Caco-2 (cell line): ENCODE measurements at regions of chr11 and their contacts with region 1.

Region 1: GRCh38 chr11:57761301-57762234 is at the start of gene CTNND1:
- DNase-seq: peak; percentile 94 to 96
- H3K4me3 ChIP-seq: peak within 1 kb of the TSS; percentile 84
- H3K4me3 Mint-ChIP-seq: peak within 1 kb of the TSS; percentile 96
- H3K27ac Mint-ChIP-seq: peak within 1 kb of the TSS; percentile 98
- H3K4me1 ChIP-seq: peaks cover 27% of the 10 kb centered on the region
- H3K4me1 Mint-ChIP-seq: peaks cover 27% of the 10 kb centered on the region
- H3K27me3 ChIP-seq: no peaks in the 10 kb centered on the region
- H3K27me3 Mint-ChIP-seq: no peaks in the 10 kb centered on the region
- CTCF ChIP-seq: peak in 1 of 2 experiments; percentile 23
- total RNA-seq, gene CTNND1: 223 and 225 TPM in 2 replicates

Region 2: GRCh38 chr11:57515332-57516060 is 246.1 kb before region 1 on chr11 and contains the start of gene SLC43A1:
- CTCF ChIA-PET with region 1: no interaction called
- POLR2A ChIA-PET with region 1: no interaction called
- intact Hi-C with region 1: no loop called
- DNase-seq: peak; percentile 66 to 75
- H3K4me3 ChIP-seq: peak within 1 kb of the TSS; percentile 79
- H3K4me3 Mint-ChIP-seq: peak within 1 kb of the TSS; percentile 91
- H3K27ac Mint-ChIP-seq: peak within 1 kb of the TSS; percentile 82
- H3K4me1 ChIP-seq: peaks cover 8% of the 10 kb centered on the region
- H3K4me1 Mint-ChIP-seq: no peaks in the 10 kb centered on the region
- H3K27me3 ChIP-seq: no peaks in the 10 kb centered on the region
- H3K27me3 Mint-ChIP-seq: no peaks in the 10 kb centered on the region
- CTCF ChIP-seq: no peak
- total RNA-seq, gene SLC43A1: 71.7 and 80.5 TPM in 2 replicates

Region 3: DNA sequence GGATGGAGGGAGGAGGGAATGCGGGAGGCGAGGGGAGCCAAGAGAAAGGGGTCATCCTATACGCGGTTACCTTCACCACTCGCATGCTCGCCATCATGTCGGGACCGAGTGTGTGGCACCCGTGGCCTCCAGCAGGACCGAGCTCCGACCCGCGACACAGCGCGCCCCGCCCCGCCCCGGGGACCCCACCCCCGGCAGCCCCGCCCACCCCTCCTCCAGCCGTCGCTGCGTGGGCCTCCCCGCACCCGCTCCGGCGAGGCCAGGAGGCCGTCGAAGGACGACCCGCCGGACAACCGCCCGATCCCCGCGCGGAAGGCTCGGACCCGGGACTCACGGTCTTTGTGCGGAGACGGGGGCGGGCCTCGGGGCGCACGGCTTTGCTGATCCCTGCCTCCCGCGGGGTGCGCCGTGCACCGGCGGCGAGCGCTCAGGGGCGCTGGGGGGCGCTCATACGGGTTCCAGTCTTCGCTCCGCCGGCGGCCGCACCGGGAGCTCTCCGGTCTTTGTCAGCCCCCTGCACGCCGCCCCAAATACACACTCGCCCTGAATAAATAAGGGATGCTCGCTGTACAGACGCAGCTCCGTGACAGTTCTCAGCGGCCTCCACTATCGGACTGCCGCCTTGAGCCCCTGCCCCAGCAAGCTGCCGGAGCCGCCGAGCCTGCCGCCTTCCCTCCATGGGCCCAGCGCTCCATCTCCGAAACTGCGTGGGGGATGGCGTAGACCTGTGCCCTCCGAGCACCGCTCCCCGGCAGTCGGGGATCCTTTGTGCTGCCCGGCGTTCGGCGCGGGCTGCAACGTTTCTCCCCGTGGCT is 193.8 kb before region 1 on chr11 and contains the start of gene UBE2L6:
- CTCF ChIA-PET with region 1: no interaction called
- POLR2A ChIA-PET with region 1: no interaction called
- intact Hi-C with region 1: no loop called
- DNase-seq: peak; percentile 55 to 67
- H3K4me3 ChIP-seq: peak within 1 kb of the TSS; percentile 54
- H3K4me3 Mint-ChIP-seq: peak within 1 kb of the TSS; percentile 96
- H3K27ac Mint-ChIP-seq: peak within 1 kb of the TSS; percentile 40
- H3K4me1 ChIP-seq: peaks cover 10% of the 10 kb centered on the region; the same call in 1 of the 2 replicates
- H3K4me1 Mint-ChIP-seq: peaks cover 14% of the 10 kb centered on the region
- H3K27me3 ChIP-seq: no peaks in the 10 kb centered on the region
- H3K27me3 Mint-ChIP-seq: no peaks in the 10 kb centered on the region
- CTCF ChIP-seq: peak in 1 of 2 experiments; percentile 49
- total RNA-seq, gene UBE2L6: 16.7 and 20.2 TPM in 2 replicates

Region 4: DNA sequence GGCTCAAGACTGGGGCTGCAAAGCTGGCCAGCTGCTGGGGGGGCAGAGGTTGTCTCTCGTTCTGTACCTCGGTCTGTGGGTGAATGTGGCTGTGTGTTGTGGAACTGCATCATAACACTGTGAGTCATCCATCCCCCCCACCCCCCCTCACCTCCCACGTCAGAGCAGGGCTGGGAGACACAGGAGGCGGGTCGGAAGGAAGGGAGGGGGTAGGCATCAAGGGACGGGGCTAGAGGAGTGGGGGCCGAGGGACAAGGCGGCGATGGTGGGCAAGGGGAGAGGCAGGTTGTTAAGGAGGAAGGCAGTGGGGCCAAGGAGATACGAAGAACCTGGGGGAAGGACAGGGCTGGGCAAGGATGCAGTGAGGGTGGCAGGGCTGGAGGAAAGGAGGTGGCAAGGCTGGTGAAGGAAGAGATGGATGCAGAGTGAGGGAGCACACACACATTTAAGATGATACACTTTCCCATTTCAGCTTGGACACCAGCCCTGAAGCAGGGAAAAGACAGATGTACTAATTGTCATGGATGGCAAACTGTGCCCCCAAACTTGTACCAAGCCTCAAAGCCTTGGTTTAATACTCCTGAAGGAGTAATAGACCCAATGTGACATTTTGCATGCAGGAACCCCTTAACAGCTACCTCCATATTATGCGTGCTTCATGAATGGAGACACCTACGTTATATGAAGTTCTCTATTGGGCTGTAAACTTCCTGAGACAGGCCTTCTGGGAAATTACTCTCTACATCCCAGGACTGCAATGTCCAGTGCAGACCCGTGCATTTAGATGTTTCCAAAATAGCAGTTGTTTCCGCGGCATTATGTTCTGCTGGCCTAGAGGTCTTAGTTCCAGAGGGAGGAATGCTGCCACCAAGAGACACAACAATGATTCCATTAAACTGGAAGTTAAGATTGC is 111.5 kb before region 1 on chr11 and contains the start of gene YPEL4:
- CTCF ChIA-PET with region 1: no interaction called
- POLR2A ChIA-PET with region 1: no interaction called
- intact Hi-C with region 1: no loop called
- DNase-seq: no peak
- H3K4me3 ChIP-seq: no peak within 1 kb of the TSS
- H3K4me3 Mint-ChIP-seq: peak within 1 kb of the TSS; percentile 17
- H3K27ac Mint-ChIP-seq: no peak within 1 kb of the TSS
- H3K4me1 ChIP-seq: 0 out of 2 replicates have a peak, but pooled peaks cover 4% of the 10 kb centered on the region
- H3K4me1 Mint-ChIP-seq: peaks cover 7% of the 10 kb centered on the region
- H3K27me3 ChIP-seq: peaks cover 2% of the 10 kb centered on the region; the same call in 1 of the 2 replicates
- H3K27me3 Mint-ChIP-seq: peaks cover 9% of the 10 kb centered on the region
- CTCF ChIP-seq: no peak
- total RNA-seq, gene YPEL4: 0.32 TPM in 1 of 2 replicates, not detected in the other

Region 5: DNA sequence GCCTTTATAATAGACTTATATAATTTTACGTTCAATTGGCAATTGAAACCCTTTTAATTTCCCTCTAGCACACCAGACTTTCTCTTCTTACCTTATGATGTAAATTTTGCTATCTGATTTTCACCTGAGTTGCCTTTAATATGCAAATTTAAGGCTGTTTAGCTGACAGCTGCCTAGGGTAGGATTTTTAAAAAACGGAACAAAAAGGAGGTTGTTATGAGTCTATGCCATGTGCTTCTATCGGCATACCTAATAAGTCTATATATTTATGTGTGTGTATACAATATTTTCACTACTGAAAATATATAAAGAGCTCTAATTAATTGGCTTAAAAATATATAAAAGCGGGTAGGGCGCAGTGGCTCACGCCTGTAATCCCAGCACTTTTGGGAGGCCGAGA is 32.1 kb before region 1 on chr11:
- CTCF ChIA-PET with region 1: no interaction called
- POLR2A ChIA-PET with region 1: no interaction called
- intact Hi-C with region 1: no loop called
- DNase-seq: no peak
- H3K4me3 ChIP-seq: no peak overlapping the region
- H3K4me3 Mint-ChIP-seq: no peak overlapping the region
- H3K27ac Mint-ChIP-seq: no peak overlapping the region
- H3K4me1 ChIP-seq: peaks cover 7% of the 10 kb centered on the region; the same call in 1 of the 2 replicates
- H3K4me1 Mint-ChIP-seq: peaks cover 11% of the 10 kb centered on the region
- H3K27me3 ChIP-seq: no peaks in the 10 kb centered on the region
- H3K27me3 Mint-ChIP-seq: no peaks in the 10 kb centered on the region
- CTCF ChIP-seq: no peak

Region 6: GRCh38 chr11:57741132-57742086 is 20.2 kb before region 1 on chr11 and contains the start of gene SELENOH:
- CTCF ChIA-PET with region 1: no interaction called
- POLR2A ChIA-PET with region 1: interaction called, 15 read pairs
- intact Hi-C with region 1: loop called (anchors 1 kb)
- DNase-seq: peak; percentile 98 to 99
- H3K4me3 ChIP-seq: peak within 1 kb of the TSS; percentile 83
- H3K4me3 Mint-ChIP-seq: peak within 1 kb of the TSS; percentile 94
- H3K27ac Mint-ChIP-seq: peak within 1 kb of the TSS; percentile 98
- H3K4me1 ChIP-seq: peaks cover 5% of the 10 kb centered on the region
- H3K4me1 Mint-ChIP-seq: peaks cover 1% of the 10 kb centered on the region
- H3K27me3 ChIP-seq: no peaks in the 10 kb centered on the region
- H3K27me3 Mint-ChIP-seq: no peaks in the 10 kb centered on the region
- CTCF ChIP-seq: no peak
- total RNA-seq, gene SELENOH: 174 and 175 TPM in 2 replicates

Region 7: DNA sequence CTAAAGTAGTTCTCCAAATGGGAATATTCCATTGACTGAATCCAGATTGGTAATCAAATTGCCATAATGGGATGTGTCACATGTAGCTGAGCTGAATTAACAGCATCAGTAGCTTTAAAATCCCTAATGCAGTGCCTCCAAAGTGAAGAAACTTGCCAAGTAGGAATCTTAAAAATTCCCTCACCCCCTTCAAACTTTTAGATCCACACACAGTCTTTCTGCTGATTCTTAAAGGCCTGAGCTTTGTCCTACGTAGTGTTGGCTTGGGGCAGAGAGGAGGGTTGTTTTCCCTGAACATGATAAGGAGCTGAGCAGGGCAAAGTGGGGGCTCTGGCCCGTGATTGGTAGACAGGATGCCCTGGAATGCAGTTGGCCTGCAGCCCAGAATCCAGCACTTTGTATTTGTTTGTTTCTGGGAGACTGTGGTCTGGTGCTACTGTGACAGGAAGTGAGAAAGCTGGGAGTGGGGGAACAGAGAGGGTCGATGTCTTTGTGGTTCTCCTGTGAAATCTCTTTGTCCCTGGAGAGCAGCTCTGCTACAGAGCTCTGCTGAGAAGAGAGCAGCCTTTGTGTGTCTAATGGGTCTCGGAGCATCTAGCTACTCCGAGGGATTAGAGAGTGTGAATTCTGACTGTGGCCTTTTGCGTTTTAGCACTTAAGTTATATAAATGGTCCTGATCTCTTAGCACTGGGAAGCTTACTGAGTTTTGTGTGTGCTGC is 16.9 kb after region 1 on chr11:
- CTCF ChIA-PET with region 1: interaction called, 18 read pairs
- POLR2A ChIA-PET with region 1: interaction called, 118 read pairs
- intact Hi-C with region 1: loop called (anchors 1 kb)
- DNase-seq: peak; percentile 90 to 94
- H3K4me3 ChIP-seq: peak overlapping the region; percentile 23
- H3K4me3 Mint-ChIP-seq: peak overlapping the region; percentile 65
- H3K27ac Mint-ChIP-seq: peak overlapping the region; percentile 94
- H3K4me1 ChIP-seq: peaks cover 87% of the 10 kb centered on the region
- H3K4me1 Mint-ChIP-seq: peaks cover 80% of the 10 kb centered on the region
- H3K27me3 ChIP-seq: no peaks in the 10 kb centered on the region
- H3K27me3 Mint-ChIP-seq: no peaks in the 10 kb centered on the region
- CTCF ChIP-seq: no peak

Region 8: GRCh38 chr11:57787920-57788702 is 26.5 kb after region 1 on chr11:
- CTCF ChIA-PET with region 1: interaction called, 7 read pairs
- POLR2A ChIA-PET with region 1: interaction called, 16 read pairs
- intact Hi-C with region 1: no loop called
- DNase-seq: peak; percentile 62 to 77
- H3K4me3 ChIP-seq: no peak overlapping the region
- H3K4me3 Mint-ChIP-seq: peak overlapping the region; percentile 64
- H3K27ac Mint-ChIP-seq: peak overlapping the region; percentile 86
- H3K4me1 ChIP-seq: peaks cover 95% of the 10 kb centered on the region
- H3K4me1 Mint-ChIP-seq: peaks cover 49% of the 10 kb centered on the region
- H3K27me3 ChIP-seq: no peaks in the 10 kb centered on the region
- H3K27me3 Mint-ChIP-seq: no peaks in the 10 kb centered on the region
- CTCF ChIP-seq: no peak